ENCODE measurements at regions of chr12 and their contacts with region 1.

Region 1: DNA sequence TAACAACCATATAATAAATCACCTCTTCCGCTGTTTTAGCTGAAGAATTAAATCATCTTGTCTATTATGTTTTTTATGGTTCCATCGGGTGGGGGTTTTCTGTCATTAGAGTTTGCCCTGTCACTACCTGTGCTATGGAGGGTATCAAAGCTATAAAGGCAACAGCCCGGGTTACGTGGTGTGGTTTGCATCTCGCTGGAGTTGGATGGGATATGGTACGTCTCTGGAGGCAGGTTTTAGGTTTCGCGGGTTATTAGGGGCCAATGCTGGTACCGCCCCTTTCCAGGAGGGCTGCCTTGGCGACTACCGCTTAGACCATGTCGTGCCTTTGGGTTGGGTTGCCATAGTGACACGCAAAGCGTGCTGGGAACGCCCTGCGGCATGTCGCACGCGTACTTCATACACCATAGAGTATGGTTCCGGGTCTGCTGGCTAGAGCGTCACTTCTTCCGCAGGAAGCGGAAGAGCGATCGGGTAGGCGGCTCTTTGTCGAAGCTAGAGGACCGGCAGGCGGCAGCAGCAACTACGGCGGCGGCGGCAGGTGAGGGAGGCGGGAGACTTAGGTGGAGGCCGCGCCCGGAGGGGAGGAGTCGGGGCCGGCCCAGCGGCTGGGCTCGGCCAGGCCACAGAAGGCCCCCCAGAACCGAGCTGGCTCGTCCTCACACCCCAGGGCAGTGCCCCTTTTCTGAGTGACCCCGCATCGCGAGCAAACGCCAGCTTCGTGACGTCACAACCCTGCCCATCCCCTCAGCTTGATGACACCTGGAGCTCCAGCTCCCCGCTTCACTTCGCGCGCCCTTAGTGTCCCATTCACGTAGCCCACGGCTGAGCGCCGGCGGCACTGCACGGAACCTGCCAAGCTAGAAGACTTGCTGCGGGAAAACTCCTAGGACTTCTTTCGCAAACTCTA is at the start of gene ZC3H10:
- DNase-seq: peak; percentile 96 to 100
- H3K4me3 ChIP-seq: peak within 1 kb of the TSS; percentile 85 to 99 (median 96)
- H3K27ac ChIP-seq: peak within 1 kb of the TSS; percentile 97
- H3K4me1 ChIP-seq: peaks cover 0 to 9% (median 5%) of the 10 kb centered on the region in 4 experiments; a peak in 5 of 7 replicates
- H3K27me3 ChIP-seq: no peaks in the 10 kb centered on the region
- CTCF ChIP-seq: peak; percentile 28 to 53 (median 41)
- EP300 ChIP-seq: peak; percentile 2 to 64; a peak in 2 of 3 replicates
- POLR2A ChIP-seq: peak; percentile 98 to 100
- RAD21 ChIP-seq: peak in 1 of 2 experiments; percentile 10; a peak in 1 of 4 replicates
- total RNA-seq, gene ZC3H10: 11.2 and 12.5 TPM in 2 replicates

Region 2: GRCh38 chr12:55973598-55974307 is 144.3 kb before region 1 on chr12 and contains the start of gene RAB5B:
- CTCF ChIA-PET with region 1: no interaction called
- POLR2A ChIA-PET with region 1: interaction called, 12 read pairs
- DNase-seq: peak; percentile 94 to 100
- H3K4me3 ChIP-seq: peak within 1 kb of the TSS; percentile 65 to 93 (median 88)
- H3K27ac ChIP-seq: peak within 1 kb of the TSS; percentile 12; the same call in 1 of the 2 replicates
- H3K4me1 ChIP-seq: peaks cover 0 to 4% (median 1%) of the 10 kb centered on the region in 4 experiments; a peak in 4 of 7 replicates
- H3K27me3 ChIP-seq: no peaks in the 10 kb centered on the region
- CTCF ChIP-seq: no peak
- EP300 ChIP-seq: no peak
- POLR2A ChIP-seq: peak; percentile 88 to 93
- RAD21 ChIP-seq: no peak
- total RNA-seq, gene RAB5B: 56.7 and 65.6 TPM in 2 replicates

Region 3: GRCh38 chr12:56014206-56014605 is 103.8 kb before region 1 on chr12:
- CTCF ChIA-PET with region 1: no interaction called
- POLR2A ChIA-PET with region 1: no interaction called
- DNase-seq: no peak
- H3K4me3 ChIP-seq: no peak overlapping the region
- H3K27ac ChIP-seq: no peak overlapping the region
- H3K4me1 ChIP-seq: no peaks in the 10 kb centered on the region
- H3K27me3 ChIP-seq: no peaks in the 10 kb centered on the region
- CTCF ChIP-seq: no peak
- EP300 ChIP-seq: no peak
- POLR2A ChIP-seq: no peak
- RAD21 ChIP-seq: no peak

Region 4: GRCh38 chr12:56084958-56085543 is 33.0 kb before region 1 on chr12:
- CTCF ChIA-PET with region 1: interaction called, 3 read pairs
- POLR2A ChIA-PET with region 1: interaction called, 66 read pairs
- DNase-seq: peak in 1 of 2 experiments; percentile 75
- H3K4me3 ChIP-seq: no peak overlapping the region
- H3K27ac ChIP-seq: no peak overlapping the region
- H3K4me1 ChIP-seq: peaks cover 3 to 13% (median 10%) of the 10 kb centered on the region in 4 experiments
- H3K27me3 ChIP-seq: no peaks in the 10 kb centered on the region
- CTCF ChIP-seq: peak; percentile 73 to 80 (median 75)
- EP300 ChIP-seq: no peak
- POLR2A ChIP-seq: no peak
- RAD21 ChIP-seq: peak; percentile 43 to 59

Region 5: DNA sequence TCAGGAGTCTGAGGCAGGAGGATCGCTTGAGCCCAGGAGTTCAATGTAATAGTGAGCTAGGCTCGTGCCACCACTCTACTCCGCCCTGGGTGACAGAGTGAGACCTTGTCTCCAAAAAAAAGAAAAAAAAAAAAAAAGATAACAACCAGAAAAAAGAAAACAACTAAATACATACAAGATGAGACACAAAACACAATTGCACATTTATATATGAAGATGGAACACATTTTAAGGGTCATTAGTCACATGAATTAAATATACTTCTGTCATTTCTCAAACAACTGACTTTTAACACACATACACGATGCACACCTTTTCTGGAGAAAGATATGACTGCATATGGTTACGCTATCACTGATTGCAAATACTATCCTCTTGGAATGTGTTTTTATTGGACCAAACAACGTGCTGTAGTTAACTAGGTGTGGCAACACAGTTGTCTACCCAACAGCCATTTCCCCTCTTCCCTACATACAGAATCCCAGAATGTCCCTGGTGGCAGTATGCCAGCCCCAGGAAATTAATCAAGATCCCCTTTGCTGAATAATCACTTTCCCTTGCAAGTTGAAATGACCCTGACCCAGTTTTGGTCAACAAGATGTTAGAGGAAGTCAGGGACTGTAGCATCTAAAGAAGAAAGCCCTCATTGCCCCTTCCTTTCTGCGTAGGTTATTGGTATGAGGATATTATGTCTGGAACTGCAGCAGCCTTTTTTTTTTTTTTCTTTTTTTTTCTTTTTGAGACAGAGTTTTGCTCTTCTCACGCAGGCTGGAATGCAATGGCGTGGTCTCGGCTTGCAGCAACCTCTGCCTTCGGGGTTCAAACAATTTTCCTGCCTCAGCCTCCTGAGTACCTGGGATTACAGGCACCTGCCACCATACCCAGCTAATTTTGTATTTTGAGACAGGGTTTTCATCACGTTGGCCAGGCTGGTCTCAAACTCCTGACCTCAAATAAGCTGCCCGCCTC is 28.7 kb after region 1 on chr12:
- CTCF ChIA-PET with region 1: interaction called, 22 read pairs
- POLR2A ChIA-PET with region 1: interaction called, 36 read pairs
- DNase-seq: no peak
- H3K4me3 ChIP-seq: no peak overlapping the region
- H3K27ac ChIP-seq: no peak overlapping the region
- H3K4me1 ChIP-seq: peaks cover 0 to 2% (median 0%) of the 10 kb centered on the region in 4 experiments; a peak in 2 of 7 replicates
- H3K27me3 ChIP-seq: no peaks in the 10 kb centered on the region; a peak in 1 of 7 replicates
- CTCF ChIP-seq: no peak
- EP300 ChIP-seq: no peak
- POLR2A ChIP-seq: peak in 1 of 2 experiments; percentile 26; a peak in 1 of 3 replicates
- RAD21 ChIP-seq: no peak

Region 6: GRCh38 chr12:56189176-56189917 is 71.3 kb after region 1 on chr12 and contains the start of gene SMARCC2:
- CTCF ChIA-PET with region 1: interaction called, 32 read pairs
- POLR2A ChIA-PET with region 1: interaction called, 3 read pairs
- DNase-seq: peak; percentile 75 to 92
- H3K4me3 ChIP-seq: peak within 1 kb of the TSS; percentile 82 to 95 (median 90)
- H3K27ac ChIP-seq: peak within 1 kb of the TSS; percentile 81
- H3K4me1 ChIP-seq: peaks cover 2 to 8% (median 4%) of the 10 kb centered on the region in 4 experiments; a peak in 3 of 7 replicates
- H3K27me3 ChIP-seq: no peaks in the 10 kb centered on the region
- CTCF ChIP-seq: peak; percentile 75 to 96 (median 84)
- EP300 ChIP-seq: peak in 1 of 2 experiments; percentile 26; a peak in 1 of 3 replicates
- POLR2A ChIP-seq: peak; percentile 24 to 65
- RAD21 ChIP-seq: peak; percentile 26 to 48; a peak in 3 of 4 replicates
- total RNA-seq, gene SMARCC2: 66.3 and 78.5 TPM in 2 replicates

Region 7: GRCh38 chr12:56258057-56258819 is 140.2 kb after region 1 on chr12 and contains the start of gene ANKRD52:
- CTCF ChIA-PET with region 1: interaction called, 12 read pairs
- POLR2A ChIA-PET with region 1: interaction called, 11 read pairs
- DNase-seq: peak in 1 of 2 experiments; percentile 89
- H3K4me3 ChIP-seq: peak within 1 kb of the TSS; percentile 60 to 96 (median 88)
- H3K27ac ChIP-seq: no peak within 1 kb of the TSS
- H3K4me1 ChIP-seq: peaks cover 8 to 17% (median 13%) of the 10 kb centered on the region in 4 experiments
- H3K27me3 ChIP-seq: no peaks in the 10 kb centered on the region
- CTCF ChIP-seq: peak; percentile 67 to 97 (median 83)
- EP300 ChIP-seq: peak in 1 of 2 experiments; percentile 23; a peak in 1 of 3 replicates
- POLR2A ChIP-seq: peak in 1 of 2 experiments; percentile 28; a peak in 2 of 3 replicates
- RAD21 ChIP-seq: peak in 1 of 2 experiments; percentile 38; a peak in 2 of 4 replicates
- total RNA-seq, gene ANKRD52: 34.1 and 36.3 TPM in 2 replicates